CD8-positive, alpha-beta memory T cell (primary cell): ENCODE measurements at regions of chr5 and their contacts with region 1.

Region 1: DNA sequence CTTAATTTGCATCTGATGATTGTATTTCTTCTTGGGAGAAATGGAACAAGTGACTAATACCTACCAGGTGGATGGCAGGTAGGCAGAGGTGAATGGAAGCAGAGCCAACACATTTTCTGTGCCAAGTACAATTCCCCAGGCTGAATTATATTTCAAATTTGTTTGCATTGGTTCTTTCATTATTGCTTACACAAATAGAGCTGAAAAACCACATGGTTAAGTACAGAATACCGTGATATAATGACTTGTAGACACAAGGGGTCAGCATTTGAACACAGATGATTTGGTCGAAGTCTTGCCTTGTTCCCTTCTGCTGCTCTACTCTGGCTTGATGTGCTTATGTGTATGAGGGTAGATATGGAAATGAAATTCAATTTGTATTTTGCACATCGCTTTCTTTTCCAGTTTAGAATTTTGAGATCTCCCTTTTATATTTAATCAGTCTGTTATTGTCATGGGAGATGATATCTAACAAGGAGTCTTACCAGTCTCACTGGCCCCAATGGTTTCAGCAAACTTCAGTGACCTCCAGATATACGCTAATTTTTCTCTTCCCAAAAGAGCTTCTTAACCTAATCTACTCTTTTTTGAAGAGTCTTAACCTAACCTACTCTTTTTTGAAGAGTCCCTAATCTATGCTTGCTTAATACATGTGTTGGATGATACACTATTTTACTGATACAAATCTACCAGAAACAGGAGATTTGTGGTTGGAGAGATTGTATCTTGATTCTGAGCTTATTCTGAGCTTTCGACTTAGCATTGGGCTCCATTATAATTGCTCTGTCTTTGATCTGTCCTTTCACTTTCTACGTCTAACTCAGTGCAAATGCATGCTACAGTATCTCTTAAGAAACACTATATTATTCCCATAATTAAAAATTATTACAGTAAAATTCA is 88.1 kb downstream of the PCSK1 start:
- DNase-seq: peak in 3 of 5 donors; percentile 3 to 55 (median 30)
- H3K4me3 ChIP-seq: no peak overlapping the region
- H3K4me3 Mint-ChIP-seq: peak overlapping the region in 4 of 7 donors; percentile 9 to 37 (median 34)
- H3K27ac ChIP-seq: no peak overlapping the region
- H3K27ac Mint-ChIP-seq: no peak overlapping the region
- H3K4me1 ChIP-seq: peaks cover 11% of the 10 kb centered on the region
- H3K4me1 Mint-ChIP-seq: peaks cover 11 to 15% (median 13%) of the 10 kb centered on the region in 3 donors
- H3K27me3 ChIP-seq: no peaks in the 10 kb centered on the region
- H3K27me3 Mint-ChIP-seq: peaks cover 10 to 26% of the 10 kb centered on the region in 2 donors

Region 2: DNA sequence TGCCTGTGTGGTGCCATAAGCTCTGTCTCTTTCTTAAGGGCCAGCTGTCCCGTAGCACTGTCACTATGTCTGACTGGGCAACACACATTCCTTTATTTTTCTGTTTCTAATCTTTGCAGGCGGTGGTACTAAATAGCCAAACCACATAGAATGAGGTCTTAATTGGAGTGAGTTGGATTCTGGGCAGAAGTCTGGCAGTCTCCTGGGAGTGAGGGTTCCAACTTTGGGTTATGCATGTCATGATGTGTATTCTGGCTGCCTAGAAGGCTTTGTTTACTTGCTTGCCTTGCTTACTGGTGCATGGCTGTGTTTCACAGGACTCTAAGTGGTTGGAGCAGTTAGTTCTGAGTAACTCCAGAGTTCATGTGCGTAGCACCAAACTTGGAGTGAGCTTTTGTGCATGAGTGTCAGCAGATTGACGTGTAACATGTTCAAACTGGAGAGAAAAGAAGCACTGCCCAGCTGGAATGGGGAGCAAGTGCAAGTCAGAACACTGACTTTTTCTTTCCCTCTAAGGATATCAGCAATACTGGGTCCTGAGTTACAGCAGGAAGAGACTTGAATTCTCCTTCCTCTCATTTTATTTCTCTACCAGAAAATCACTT is 97.7 kb before region 1 on chr5:
- CTCF ChIA-PET with region 1: no interaction called
- POLR2A ChIA-PET with region 1: no interaction called
- DNase-seq: no peak
- H3K4me3 ChIP-seq: no peak overlapping the region
- H3K4me3 Mint-ChIP-seq: no peak overlapping the region
- H3K27ac ChIP-seq: no peak overlapping the region
- H3K27ac Mint-ChIP-seq: no peak overlapping the region
- H3K4me1 ChIP-seq: no peaks in the 10 kb centered on the region
- H3K4me1 Mint-ChIP-seq: no peaks in the 10 kb centered on the region
- H3K27me3 ChIP-seq: no peaks in the 10 kb centered on the region
- H3K27me3 Mint-ChIP-seq: peaks cover 1 to 13% of the 10 kb centered on the region in 2 donors

Region 3: DNA sequence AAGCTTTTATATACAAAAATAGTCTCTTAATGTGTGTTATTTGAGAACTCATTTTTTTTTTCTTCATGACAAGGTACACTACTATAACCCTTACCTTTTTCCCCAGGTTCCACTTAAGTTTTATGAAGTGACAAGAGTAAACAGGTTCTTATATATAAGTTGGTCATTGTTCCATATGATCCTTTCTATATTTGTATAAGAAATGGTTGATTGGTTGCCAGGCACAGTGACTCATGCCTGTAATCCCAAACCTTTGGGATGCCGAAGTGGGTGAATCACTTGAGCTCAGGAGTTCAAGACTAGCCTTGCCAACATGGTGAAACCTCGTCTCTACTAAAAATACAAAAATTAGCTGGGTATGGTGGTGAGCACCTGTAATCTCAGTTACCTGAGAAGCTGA is 20.2 kb before region 1 on chr5:
- CTCF ChIA-PET with region 1: no interaction called
- POLR2A ChIA-PET with region 1: no interaction called
- DNase-seq: no peak
- H3K4me3 ChIP-seq: no peak overlapping the region
- H3K4me3 Mint-ChIP-seq: no peak overlapping the region
- H3K27ac ChIP-seq: no peak overlapping the region
- H3K27ac Mint-ChIP-seq: no peak overlapping the region
- H3K4me1 ChIP-seq: no peaks in the 10 kb centered on the region
- H3K4me1 Mint-ChIP-seq: no peaks in the 10 kb centered on the region
- H3K27me3 ChIP-seq: no peaks in the 10 kb centered on the region
- H3K27me3 Mint-ChIP-seq: peaks cover 9 to 12% of the 10 kb centered on the region in 2 donors

Region 4: DNA sequence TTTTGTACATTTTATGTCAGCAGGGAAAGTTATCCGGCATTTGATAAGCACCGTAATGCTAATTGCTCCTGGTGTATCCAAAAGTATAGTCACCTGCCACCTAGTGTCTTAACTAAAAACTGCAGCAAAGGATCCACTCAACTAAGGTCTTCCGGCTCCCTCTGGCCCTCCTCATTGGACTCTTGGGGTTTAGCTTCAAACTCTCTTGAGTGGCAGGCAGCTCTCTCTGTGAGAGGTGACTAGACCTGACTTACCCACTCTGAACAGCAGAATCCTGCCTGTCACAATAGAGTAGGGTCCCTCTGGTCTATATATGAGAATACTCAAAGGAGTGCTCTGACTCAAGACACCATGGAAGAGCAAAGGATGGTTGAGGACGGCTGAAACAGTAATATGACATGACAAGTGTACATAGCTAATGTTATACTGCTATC is 256.9 kb after region 1 on chr5:
- CTCF ChIA-PET with region 1: interaction called, 132 read pairs
- POLR2A ChIA-PET with region 1: interaction called, 3 read pairs
- DNase-seq: peak; percentile 24 to 62 (median 52)
- H3K4me3 ChIP-seq: no peak overlapping the region
- H3K4me3 Mint-ChIP-seq: no peak overlapping the region
- H3K27ac ChIP-seq: no peak overlapping the region
- H3K27ac Mint-ChIP-seq: no peak overlapping the region
- H3K4me1 ChIP-seq: no peaks in the 10 kb centered on the region
- H3K4me1 Mint-ChIP-seq: peaks cover 2 to 3% (median 2%) of the 10 kb centered on the region in 3 donors
- H3K27me3 ChIP-seq: no peaks in the 10 kb centered on the region
- H3K27me3 Mint-ChIP-seq: peaks cover 5 to 13% of the 10 kb centered on the region in 2 donors